IMR-90 (cell line): ENCODE measurements at regions of chr7 and their contacts with region 1.

Region 1: DNA sequence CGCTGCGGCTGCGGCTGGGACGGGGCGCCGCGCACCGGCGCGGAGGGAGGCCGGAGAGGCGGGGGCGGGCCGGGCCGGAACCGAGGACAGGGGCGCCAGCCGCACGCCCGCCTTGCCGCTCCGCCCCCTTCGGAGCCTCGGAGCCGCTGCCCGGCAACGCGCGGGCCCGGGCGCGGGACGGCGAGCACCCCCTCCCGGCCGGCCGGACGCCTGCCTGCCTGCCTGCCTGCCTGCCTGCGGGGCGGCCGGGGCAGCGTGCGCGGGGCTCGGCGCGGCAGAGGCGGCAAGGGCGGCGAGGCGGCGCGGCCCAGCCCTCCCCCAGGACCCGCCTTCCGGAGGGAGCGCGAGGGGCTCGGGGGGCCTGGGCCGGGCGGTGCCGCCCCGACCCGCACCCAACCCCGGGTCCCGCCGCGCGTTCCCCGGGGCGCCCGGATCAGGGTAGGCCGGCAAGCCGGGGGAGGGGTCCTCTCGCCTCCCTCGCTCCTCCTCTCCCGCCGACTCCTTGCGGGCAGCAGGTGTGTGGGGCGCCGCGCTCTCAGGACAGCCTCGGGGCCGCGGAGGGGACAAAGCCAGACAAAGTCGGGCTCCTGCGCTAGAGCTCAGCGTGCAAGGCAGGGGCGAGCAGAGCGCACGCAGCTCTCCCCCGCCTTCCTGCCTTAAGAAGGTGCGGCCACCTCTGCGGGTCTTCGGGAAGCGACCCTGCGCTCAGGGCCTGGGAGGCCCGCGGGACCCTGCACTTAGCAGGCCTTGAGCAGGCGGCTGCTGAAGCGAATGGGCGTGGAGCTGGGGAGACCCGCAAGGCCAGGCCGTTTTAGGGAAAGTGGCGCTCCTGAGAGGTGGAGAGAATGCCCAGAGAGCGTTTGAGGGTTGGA is at the start of gene KIAA1549:
- DNase-seq: peak; percentile 64
- ATAC-seq: peak; percentile 95
- H3K4me3 ChIP-seq: peak within 1 kb of the TSS; percentile 73
- H3K27ac ChIP-seq: no peak within 1 kb of the TSS; the same call in 1 of the 2 replicates
- H3K4me1 ChIP-seq: peaks cover 3% of the 10 kb centered on the region; the same call in 1 of the 2 replicates
- H3K27me3 ChIP-seq: peaks cover 2% of the 10 kb centered on the region; the same call in 1 of the 2 replicates
- CTCF ChIP-seq: peak; percentile 58
- POLR2A ChIP-seq: no peak
- RAD21 ChIP-seq: peak; percentile 48
- total RNA-seq, gene KIAA1549: 1.1 and 1.3 TPM in 2 replicates

Region 2: DNA sequence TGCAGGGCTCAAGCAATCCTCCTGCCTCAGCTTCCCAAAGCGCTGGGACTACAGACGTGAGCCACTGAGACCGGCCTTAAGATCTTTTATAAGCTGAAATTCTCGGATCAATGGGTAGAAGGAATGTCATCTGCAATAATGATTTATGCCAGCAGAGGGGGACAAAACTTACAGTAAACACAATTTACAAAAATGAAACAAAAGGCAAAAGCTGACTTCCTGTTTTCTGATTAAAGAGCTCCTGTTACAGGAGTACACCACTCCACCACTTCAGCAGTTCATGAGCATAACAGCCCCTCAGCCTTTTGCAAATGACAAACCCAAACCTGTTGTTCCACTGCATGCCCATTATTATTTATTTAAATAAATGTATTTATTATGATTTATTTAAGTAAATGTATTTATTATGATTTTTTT is 95.1 kb before region 1 on chr7:
- CTCF ChIA-PET with region 1: interaction called, 6 read pairs
- POLR2A ChIA-PET with region 1: no interaction called
- dilution Hi-C with region 1: no loop called
- in situ Hi-C with region 1: no loop called
- intact Hi-C with region 1: loop called (anchors 1 kb)
- DNase-seq: peak; percentile 73
- ATAC-seq: peak; percentile 79
- H3K4me3 ChIP-seq: no peak overlapping the region
- H3K27ac ChIP-seq: no peak overlapping the region
- H3K4me1 ChIP-seq: peaks cover 6% of the 10 kb centered on the region; the same call in 1 of the 2 replicates
- H3K27me3 ChIP-seq: no peaks in the 10 kb centered on the region
- CTCF ChIP-seq: peak; percentile 77
- POLR2A ChIP-seq: no peak
- RAD21 ChIP-seq: peak; percentile 66

Region 3: DNA sequence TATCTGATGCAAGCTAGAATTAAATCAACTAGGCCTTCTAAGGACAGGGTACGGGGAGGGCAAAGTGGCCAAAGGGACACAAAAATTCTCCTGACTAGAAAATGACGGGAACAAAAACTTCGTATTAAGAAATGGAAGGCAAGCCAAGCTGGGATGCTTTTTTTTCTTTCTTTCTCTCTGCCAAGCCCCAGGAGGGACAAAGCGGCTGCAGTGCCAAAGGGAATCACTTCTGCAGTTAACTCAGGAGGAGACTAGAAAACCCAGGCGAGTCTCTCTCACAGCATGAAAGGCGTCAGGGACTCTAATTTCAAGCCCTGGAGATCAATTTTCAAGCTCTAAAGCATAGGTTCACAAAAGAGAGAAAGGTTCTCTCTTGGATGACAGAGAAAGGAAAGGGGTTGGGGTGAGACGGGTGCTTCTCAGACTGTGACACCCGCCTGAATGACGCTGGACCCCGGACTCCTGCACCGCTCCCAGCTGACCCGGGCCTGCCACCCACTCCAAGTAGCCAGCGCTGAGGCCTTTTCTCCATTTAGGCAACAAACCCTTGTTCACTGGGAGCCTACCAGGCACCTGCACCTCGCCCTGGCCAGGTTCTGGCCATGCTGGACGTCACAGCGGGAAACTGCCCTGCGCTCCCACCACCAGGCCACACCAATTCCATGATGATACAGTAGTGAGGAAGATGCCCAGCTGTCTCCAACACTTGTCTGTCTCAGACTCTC is 56.9 kb before region 1 on chr7:
- CTCF ChIA-PET with region 1: interaction called, 3 read pairs
- POLR2A ChIA-PET with region 1: no interaction called
- dilution Hi-C with region 1: no loop called
- in situ Hi-C with region 1: no loop called
- intact Hi-C with region 1: loop called (anchors 5 kb)
- DNase-seq: no peak
- ATAC-seq: no peak
- H3K4me3 ChIP-seq: no peak overlapping the region
- H3K27ac ChIP-seq: no peak overlapping the region
- H3K4me1 ChIP-seq: peaks cover 6% of the 10 kb centered on the region
- H3K27me3 ChIP-seq: no peaks in the 10 kb centered on the region
- CTCF ChIP-seq: no peak
- POLR2A ChIP-seq: no peak
- RAD21 ChIP-seq: no peak

Region 4: GRCh38 chr7:139075031-139075652 is 93.6 kb after region 1 on chr7:
- CTCF ChIA-PET with region 1: no interaction called
- POLR2A ChIA-PET with region 1: no interaction called
- dilution Hi-C with region 1: no loop called
- in situ Hi-C with region 1: no loop called
- intact Hi-C with region 1: no loop called
- DNase-seq: peak; percentile 77
- ATAC-seq: peak; percentile 96
- H3K4me3 ChIP-seq: no peak overlapping the region
- H3K27ac ChIP-seq: no peak overlapping the region
- H3K4me1 ChIP-seq: no peaks in the 10 kb centered on the region
- H3K27me3 ChIP-seq: no peaks in the 10 kb centered on the region
- CTCF ChIP-seq: peak; percentile 88
- POLR2A ChIP-seq: no peak
- RAD21 ChIP-seq: peak; percentile 78